ENCODE measurements at regions of chr11 and their contacts with region 1.

Region 1: GRCh38 chr11:102614485-102614884 is 10.6 kb downstream of the MMP20 start:
- DNase-seq: no peak
- ATAC-seq: no peak
- H3K4me3 ChIP-seq: no peak overlapping the region
- H3K4me3 Mint-ChIP-seq: no peak overlapping the region
- H3K27ac ChIP-seq: no peak overlapping the region
- H3K27ac Mint-ChIP-seq: no peak overlapping the region
- H3K4me1 ChIP-seq: peaks cover 17 to 26% of the 10 kb centered on the region in 2 donors
- H3K4me1 Mint-ChIP-seq: peaks cover 26% of the 10 kb centered on the region
- H3K27me3 ChIP-seq: no peaks in the 10 kb centered on the region
- H3K27me3 Mint-ChIP-seq: no peaks in the 10 kb centered on the region
- CTCF ChIP-seq: no peak

Region 2: GRCh38 chr11:102287964-102288724 is 326.3 kb before region 1 on chr11:
- CTCF ChIA-PET with region 1: interaction called, 79 read pairs
- POLR2A ChIA-PET with region 1: no interaction called
- intact Hi-C with region 1: loop called (anchors 1 kb)
- DNase-seq: peak; percentile 84
- ATAC-seq: peak; percentile 83
- H3K4me3 ChIP-seq: peak overlapping the region; percentile 27 to 70 (median 48)
- H3K4me3 Mint-ChIP-seq: peak overlapping the region; percentile 64
- H3K27ac ChIP-seq: peak overlapping the region in 1 of 2 donors; percentile 8
- H3K27ac Mint-ChIP-seq: peak overlapping the region; percentile 69
- H3K4me1 ChIP-seq: peaks cover 26 to 34% of the 10 kb centered on the region in 2 donors
- H3K4me1 Mint-ChIP-seq: peaks cover 46% of the 10 kb centered on the region
- H3K27me3 ChIP-seq: no peaks in the 10 kb centered on the region
- H3K27me3 Mint-ChIP-seq: no peaks in the 10 kb centered on the region
- CTCF ChIP-seq: peak; percentile 80

Region 3: DNA sequence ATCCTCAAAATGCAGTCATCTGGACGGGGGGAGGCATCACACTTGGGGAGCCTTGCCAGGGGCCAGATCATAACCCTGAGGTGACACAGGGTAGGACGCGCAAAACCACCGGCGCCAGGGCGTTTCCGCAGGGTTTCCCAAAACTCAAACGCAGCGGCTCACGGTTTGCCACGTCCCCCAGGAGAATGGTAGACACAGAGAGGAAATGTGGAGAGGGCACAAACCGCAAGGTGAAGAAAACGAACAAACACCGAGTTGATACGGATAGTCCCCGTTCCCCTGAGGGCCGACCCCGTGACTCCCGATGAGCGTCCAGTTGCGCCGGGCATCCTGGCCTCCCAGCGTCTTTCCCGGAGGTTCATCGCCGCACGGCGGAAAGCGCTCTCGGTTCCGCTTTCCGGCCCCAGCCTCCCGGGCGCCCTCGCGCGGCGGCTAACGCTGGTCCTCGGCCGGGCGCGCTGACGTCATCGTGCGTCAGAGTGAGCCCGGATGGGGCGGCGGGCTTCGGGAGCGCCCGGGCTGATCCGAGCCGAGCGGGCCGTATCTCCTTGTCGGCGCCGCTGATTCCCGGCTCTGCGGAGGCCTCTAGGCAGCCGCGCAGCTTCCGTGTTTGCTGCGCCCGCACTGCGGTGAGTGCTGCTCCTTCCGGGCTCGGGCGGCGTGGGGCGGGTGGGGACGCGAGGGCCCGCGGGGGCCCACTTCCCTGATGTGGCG is 267.6 kb before region 1 on chr11 and contains the start of gene BIRC2:
- CTCF ChIA-PET with region 1: interaction called, 129 read pairs
- POLR2A ChIA-PET with region 1: interaction called, 3 read pairs
- intact Hi-C with region 1: no loop called
- DNase-seq: peak; percentile 98
- ATAC-seq: peak; percentile 88
- H3K4me3 ChIP-seq: peak within 1 kb of the TSS; percentile 63 to 98 (median 92)
- H3K4me3 Mint-ChIP-seq: peak within 1 kb of the TSS; percentile 90
- H3K27ac ChIP-seq: peak within 1 kb of the TSS; percentile 94 to 97
- H3K27ac Mint-ChIP-seq: peak within 1 kb of the TSS; percentile 98
- H3K4me1 ChIP-seq: peaks cover 14 to 21% of the 10 kb centered on the region in 2 donors
- H3K4me1 Mint-ChIP-seq: peaks cover 36% of the 10 kb centered on the region
- H3K27me3 ChIP-seq: no peaks in the 10 kb centered on the region
- H3K27me3 Mint-ChIP-seq: no peaks in the 10 kb centered on the region
- CTCF ChIP-seq: peak; percentile 73
- total RNA-seq, gene BIRC2: 46.7 and 51.0 TPM in 2 replicates

Region 4: DNA sequence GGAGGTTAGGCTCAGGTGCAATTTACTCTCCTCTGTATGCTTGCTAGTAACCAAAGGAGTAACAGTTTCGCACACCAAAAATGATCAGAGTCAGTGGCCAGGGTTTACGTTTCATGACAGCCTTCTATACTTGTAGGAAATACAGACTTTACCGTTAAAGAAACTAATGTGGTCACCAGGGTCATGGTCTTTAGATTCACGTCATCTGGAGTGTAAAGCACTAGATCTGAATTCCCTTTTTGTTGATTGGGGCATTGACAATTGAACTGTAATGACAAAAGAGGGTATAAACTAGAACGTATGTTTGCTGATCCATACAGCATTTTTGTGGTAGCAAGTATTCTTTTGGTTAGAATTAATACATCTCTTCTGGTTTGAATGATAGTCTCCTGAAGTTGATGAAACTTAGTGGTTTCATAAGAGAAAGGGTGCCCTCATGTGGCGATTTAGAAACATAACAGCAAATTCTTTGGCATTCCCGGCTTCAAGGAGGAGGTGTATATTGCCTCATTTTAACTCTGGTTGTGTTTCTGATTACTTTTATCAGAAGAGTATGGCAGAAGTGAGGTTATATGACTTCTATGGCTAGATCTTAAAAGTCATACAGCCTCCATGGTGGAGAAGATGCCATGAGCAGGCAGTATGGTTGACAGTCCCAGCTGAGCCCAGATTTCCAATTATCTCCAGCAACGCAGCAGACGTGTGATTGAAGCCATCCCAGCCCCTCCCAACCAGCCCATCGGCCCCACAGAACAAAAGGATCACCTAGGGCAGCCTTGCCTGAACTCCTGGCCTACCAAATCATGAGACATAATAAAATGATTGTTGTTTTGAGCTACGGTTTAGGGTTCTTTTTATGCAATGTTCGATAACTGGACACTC is 119.1 kb before region 1 on chr11:
- CTCF ChIA-PET with region 1: interaction called, 43 read pairs
- POLR2A ChIA-PET with region 1: interaction called, 8 read pairs
- intact Hi-C with region 1: loop called (anchors 1 kb)
- DNase-seq: peak; percentile 86
- ATAC-seq: peak; percentile 73
- H3K4me3 ChIP-seq: no peak overlapping the region
- H3K4me3 Mint-ChIP-seq: peak overlapping the region; percentile 55
- H3K27ac ChIP-seq: no peak overlapping the region
- H3K27ac Mint-ChIP-seq: peak overlapping the region; percentile 50
- H3K4me1 ChIP-seq: peaks cover 0 to 7% of the 10 kb centered on the region in 2 donors
- H3K4me1 Mint-ChIP-seq: peaks cover 14% of the 10 kb centered on the region
- H3K27me3 ChIP-seq: no peaks in the 10 kb centered on the region
- H3K27me3 Mint-ChIP-seq: no peaks in the 10 kb centered on the region
- CTCF ChIP-seq: peak; percentile 81

Region 5: GRCh38 chr11:102592634-102593581 is 21.6 kb before region 1 on chr11:
- CTCF ChIA-PET with region 1: interaction called, 4 read pairs
- POLR2A ChIA-PET with region 1: no interaction called
- intact Hi-C with region 1: loop called (anchors 1 kb)
- DNase-seq: no peak
- ATAC-seq: no peak
- H3K4me3 ChIP-seq: no peak overlapping the region
- H3K4me3 Mint-ChIP-seq: no peak overlapping the region
- H3K27ac ChIP-seq: no peak overlapping the region
- H3K27ac Mint-ChIP-seq: no peak overlapping the region
- H3K4me1 ChIP-seq: peaks cover 26 to 29% of the 10 kb centered on the region in 2 donors
- H3K4me1 Mint-ChIP-seq: peaks cover 35% of the 10 kb centered on the region
- H3K27me3 ChIP-seq: no peaks in the 10 kb centered on the region
- H3K27me3 Mint-ChIP-seq: no peaks in the 10 kb centered on the region
- CTCF ChIP-seq: peak; percentile 55